ENCODE measurements at regions of chr7 and their contacts with region 1.

Region 1: GRCh38 chr7:112398534-112398933 is 51.7 kb upstream of the IFRD1 start:
- DNase-seq: no peak
- H3K4me3 Mint-ChIP-seq: no peak overlapping the region
- H3K27ac Mint-ChIP-seq: no peak overlapping the region
- H3K4me1 Mint-ChIP-seq: peaks cover 13% of the 10 kb centered on the region
- H3K27me3 Mint-ChIP-seq: peaks cover 4% of the 10 kb centered on the region

Region 2: DNA sequence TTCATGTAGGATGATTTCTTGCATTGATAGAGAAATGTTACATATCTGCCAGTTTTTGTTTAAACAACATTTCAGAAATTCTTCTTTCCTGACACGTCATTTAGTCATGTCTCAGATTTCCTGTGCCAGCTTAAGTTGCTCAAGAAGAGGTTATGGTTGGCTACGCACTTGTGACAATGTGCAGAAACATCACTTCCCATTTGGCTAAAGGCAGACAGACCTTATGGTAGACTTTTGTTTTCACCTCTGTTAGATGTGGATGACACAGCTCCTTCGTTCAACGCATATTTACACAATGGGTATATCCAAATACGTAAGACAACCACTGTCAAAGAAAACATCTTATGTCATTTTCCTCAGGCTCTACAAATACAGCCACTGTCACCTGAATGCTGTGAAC is 318.1 kb before region 1 on chr7:
- CTCF ChIA-PET with region 1: no interaction called
- POLR2A ChIA-PET with region 1: no interaction called
- intact Hi-C with region 1: loop called (anchors 10 kb)
- DNase-seq: no peak
- H3K4me3 Mint-ChIP-seq: no peak overlapping the region
- H3K27ac Mint-ChIP-seq: no peak overlapping the region
- H3K4me1 Mint-ChIP-seq: peaks cover 7% of the 10 kb centered on the region
- H3K27me3 Mint-ChIP-seq: peaks cover 10% of the 10 kb centered on the region

Region 3: DNA sequence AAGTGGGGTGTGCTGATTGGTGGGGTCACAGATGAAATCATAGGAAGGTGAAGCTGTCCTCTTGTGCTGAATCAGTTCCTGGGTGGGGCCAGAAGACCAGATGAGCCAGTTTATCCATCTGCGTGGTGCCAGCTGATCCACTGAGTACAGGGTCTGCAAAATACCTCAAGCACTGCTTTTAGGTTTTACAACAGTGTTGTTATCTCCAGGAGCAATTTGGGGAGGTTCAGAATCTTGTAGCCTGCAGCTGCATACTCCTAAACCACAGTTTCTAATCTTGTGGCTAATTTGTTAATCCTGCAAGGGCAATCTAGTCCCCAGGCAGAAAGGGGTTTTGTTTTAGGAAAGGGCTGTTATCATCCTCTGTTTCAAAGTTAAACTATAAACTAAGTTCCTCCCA is 34.8 kb after region 1 on chr7:
- CTCF ChIA-PET with region 1: no interaction called
- POLR2A ChIA-PET with region 1: no interaction called
- intact Hi-C with region 1: no loop called
- DNase-seq: no peak
- H3K4me3 Mint-ChIP-seq: no peak overlapping the region
- H3K27ac Mint-ChIP-seq: no peak overlapping the region
- H3K4me1 Mint-ChIP-seq: no peaks in the 10 kb centered on the region
- H3K27me3 Mint-ChIP-seq: no peaks in the 10 kb centered on the region